ENCODE measurements at regions of chr11 and their contacts with region 1.

Region 1: GRCh38 chr11:12909879-12910278 is 99.2 kb upstream of the RASSF10 start:
- DNase-seq: no peak
- ATAC-seq: no peak
- H3K4me3 ChIP-seq: no peak overlapping the region
- H3K27ac ChIP-seq: no peak overlapping the region
- H3K4me1 ChIP-seq: peaks cover 0 to 9% (median 3%) of the 10 kb centered on the region in 12 donors
- H3K27me3 ChIP-seq: no peaks in the 10 kb centered on the region
- CTCF ChIP-seq: no peak
- POLR2A ChIP-seq: no peak

Region 2: DNA sequence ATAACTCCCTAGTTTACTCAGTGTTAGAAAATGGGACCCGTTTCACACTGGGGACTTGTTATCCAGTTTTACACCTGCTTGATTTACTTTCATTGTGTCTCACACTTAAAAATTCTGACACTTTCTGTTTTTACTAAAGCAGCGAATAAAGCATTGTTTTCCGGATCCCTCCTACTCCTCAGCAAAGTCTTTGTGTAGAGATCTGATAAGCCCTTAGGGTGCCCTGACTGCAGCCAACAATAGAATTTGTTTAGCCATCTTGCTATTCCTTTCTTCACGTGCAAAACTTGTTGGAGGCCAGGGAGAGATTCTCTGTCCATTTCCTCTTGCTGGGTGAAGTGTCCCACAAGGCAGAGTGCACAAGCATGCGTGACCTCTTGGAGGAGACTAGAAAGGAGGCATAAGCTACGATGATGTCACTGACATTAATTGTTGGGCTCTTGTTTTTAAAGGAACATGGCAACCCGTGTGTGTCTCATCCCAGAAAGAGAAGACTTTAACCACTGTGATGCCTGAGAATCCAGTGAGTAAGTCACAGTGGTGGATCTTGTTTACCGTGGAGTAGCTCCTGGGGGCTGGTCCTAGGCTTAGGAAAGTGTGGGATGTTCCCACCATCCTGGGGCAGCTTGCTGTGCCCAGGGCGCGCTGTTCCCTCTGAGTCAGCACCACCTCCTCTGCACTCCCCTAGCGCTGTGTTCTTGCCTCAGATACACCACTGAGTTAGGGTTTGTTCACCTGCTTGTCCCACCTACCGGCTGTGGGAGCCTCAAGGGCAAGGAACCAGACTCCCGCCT is 771.7 kb before region 1 on chr11:
- intact Hi-C with region 1: loop called in 1 of 10 experiments (anchors 5 kb)
- DNase-seq: no peak
- ATAC-seq: peak in 2 of 4 donors; percentile 11 to 13
- H3K4me3 ChIP-seq: no peak overlapping the region
- H3K27ac ChIP-seq: peak overlapping the region in 7 of 12 donors; percentile 42 to 87 (median 52)
- H3K4me1 ChIP-seq: peaks cover 0 to 96% (median 61%) of the 10 kb centered on the region in 12 donors
- H3K27me3 ChIP-seq: no peaks in the 10 kb centered on the region
- CTCF ChIP-seq: no peak
- POLR2A ChIP-seq: no peak